ENCODE measurements at regions of chr12 and their contacts with region 1.

Region 1: DNA sequence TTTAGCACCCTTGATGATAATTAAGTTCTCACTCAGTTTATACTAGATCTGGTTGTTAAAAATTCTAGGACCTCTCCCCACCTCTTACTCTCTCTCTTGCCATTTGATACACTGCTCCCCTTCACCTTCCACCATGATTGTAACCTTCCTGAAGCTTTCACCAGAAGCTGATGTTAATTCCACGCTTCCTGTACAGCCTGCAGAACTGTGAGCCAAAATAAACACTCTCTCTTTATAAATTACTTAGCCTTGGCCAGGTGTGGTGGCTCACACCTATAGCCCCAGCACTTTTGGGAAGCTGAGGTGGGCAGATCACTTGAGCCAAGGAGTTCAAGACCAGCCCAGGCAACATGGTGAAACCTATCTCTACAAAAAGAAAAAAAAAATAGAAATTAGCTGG is 11.1 kb upstream of the HECTD4 start:
- DNase-seq: no peak
- ATAC-seq: no peak
- H3K4me3 ChIP-seq: no peak overlapping the region
- H3K27ac ChIP-seq: peak overlapping the region in 1 of 4 donors; percentile 30
- H3K4me1 ChIP-seq: no peaks in the 10 kb centered on the region
- H3K27me3 ChIP-seq: no peaks in the 10 kb centered on the region
- CTCF ChIP-seq: no peak
- POLR2A ChIP-seq: no peak

Region 2: DNA sequence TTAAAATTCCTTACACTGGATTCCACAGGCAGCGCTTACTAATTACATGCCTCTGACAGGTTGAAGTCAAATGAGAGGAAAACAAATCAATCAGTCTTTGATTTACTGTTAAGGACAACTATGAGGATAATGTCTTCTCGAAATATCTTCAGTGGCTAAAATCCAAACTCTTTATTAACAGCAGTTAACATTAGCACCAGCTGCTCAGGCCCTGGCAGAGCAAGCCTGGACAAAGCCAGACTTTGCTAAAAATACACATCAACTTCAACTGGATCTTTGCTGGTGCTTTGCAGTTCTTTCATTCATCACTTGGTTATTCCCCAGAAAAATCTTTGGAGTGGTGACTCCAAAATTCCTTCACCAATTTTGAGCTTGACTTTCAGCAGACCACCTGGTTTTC is 109.8 kb before region 1 on chr12:
- in situ Hi-C with region 1: loop called (anchors 10 to 25 kb)
- intact Hi-C with region 1: no loop called
- DNase-seq: peak in 1 of 2 donors; percentile 20
- ATAC-seq: peak; percentile 60 to 73
- H3K4me3 ChIP-seq: no peak overlapping the region
- H3K27ac ChIP-seq: peak overlapping the region in 1 of 4 donors; percentile 13
- H3K4me1 ChIP-seq: peaks cover 21 to 32% of the 10 kb centered on the region in 2 donors
- H3K27me3 ChIP-seq: no peaks in the 10 kb centered on the region
- CTCF ChIP-seq: no peak
- POLR2A ChIP-seq: no peak